Cardiac septum (tissue), 1 donor: ENCODE measurements at regions of chr2 and their contacts with region 1.

Region 1: GRCh38 chr2:113756355-113757137 is at the start of gene SLC35F5:
- DNase-seq: peak; percentile 97
- total RNA-seq, gene SLC35F5: 66.3 TPM

Region 2: GRCh38 chr2:113889471-113890252 is 133.1 kb after region 1 on chr2 and contains the start of gene ACTR3:
- intact Hi-C with region 1: loop called (anchors 2 kb)
- DNase-seq: peak; percentile 99
- total RNA-seq, gene ACTR3: 152 TPM

Region 3: GRCh38 chr2:114553027-114553426 is 796.5 kb after region 1 on chr2:
- intact Hi-C with region 1: no loop called
- DNase-seq: no peak